WTC11 (cell line): ENCODE measurements at regions of chr11 and their contacts with region 1.

Region 1: GRCh38 chr11:17473071-17473744 is 3.4 kb downstream of the ABCC8 start:
- DNase-seq: peak; percentile 76
- ATAC-seq: peak; percentile 91
- H3K4me3 Mint-ChIP-seq: peak overlapping the region; percentile 11; the same call in 1 of the 2 replicates
- H3K27ac Mint-ChIP-seq: no peak overlapping the region
- H3K4me1 Mint-ChIP-seq: peaks cover 14% of the 10 kb centered on the region
- H3K27me3 Mint-ChIP-seq: peaks cover 47% of the 10 kb centered on the region
- CTCF ChIP-seq: peak; percentile 25; the same call in 1 of the 2 replicates

Region 2: GRCh38 chr11:17405232-17406005 is 67.8 kb before region 1 on chr11:
- CTCF ChIA-PET with region 1: interaction called, 13 read pairs
- POLR2A ChIA-PET with region 1: no interaction called
- DNase-seq: peak; percentile 46
- ATAC-seq: peak; percentile 74
- H3K4me3 Mint-ChIP-seq: no peak overlapping the region
- H3K27ac Mint-ChIP-seq: no peak overlapping the region
- H3K4me1 Mint-ChIP-seq: no peaks in the 10 kb centered on the region
- H3K27me3 Mint-ChIP-seq: no peaks in the 10 kb centered on the region; the same call in 1 of the 2 replicates
- CTCF ChIP-seq: no peak

Region 3: DNA sequence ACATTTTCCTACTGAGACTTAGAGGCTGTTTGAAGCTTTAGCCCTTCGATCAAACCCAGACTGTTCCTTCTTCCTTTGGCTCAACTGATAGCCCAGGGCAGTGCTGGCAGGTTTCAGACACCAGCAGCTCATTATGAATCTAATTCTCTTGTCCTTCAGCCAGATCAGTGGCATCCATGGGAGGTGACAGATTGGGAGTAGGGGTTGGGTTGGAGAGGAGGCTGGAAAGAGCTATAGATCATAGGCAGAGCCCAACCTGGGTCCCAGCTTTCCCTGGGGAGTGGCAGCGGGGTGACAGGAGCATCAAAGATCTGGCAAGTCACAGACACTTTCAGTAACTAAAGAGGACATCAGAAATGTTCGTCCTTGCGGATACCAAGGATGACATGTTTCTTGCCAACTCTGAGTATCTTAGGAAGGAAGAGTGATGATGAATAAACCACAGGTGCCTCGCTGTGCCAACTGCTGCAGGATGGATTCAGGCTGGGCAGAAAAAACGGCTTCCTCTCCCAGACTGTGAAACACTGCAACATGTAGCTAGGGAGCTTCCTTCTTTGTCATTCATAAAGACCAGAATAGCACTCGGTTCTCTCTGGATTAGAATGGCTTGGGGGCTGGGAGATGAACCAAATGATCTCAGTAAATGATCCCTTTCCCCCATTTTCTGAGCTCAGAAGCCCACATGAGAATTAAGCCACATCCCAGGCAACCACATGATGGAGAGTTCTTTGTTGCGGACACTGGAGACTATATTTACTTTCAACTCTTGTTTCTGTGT is 15.6 kb before region 1 on chr11:
- CTCF ChIA-PET with region 1: interaction called, 11 read pairs
- POLR2A ChIA-PET with region 1: interaction called, 3 read pairs
- DNase-seq: no peak
- ATAC-seq: peak; percentile 77
- H3K4me3 Mint-ChIP-seq: no peak overlapping the region
- H3K27ac Mint-ChIP-seq: no peak overlapping the region
- H3K4me1 Mint-ChIP-seq: peaks cover 21% of the 10 kb centered on the region
- H3K27me3 Mint-ChIP-seq: no peaks in the 10 kb centered on the region; the same call in 1 of the 2 replicates
- CTCF ChIP-seq: no peak